ENCODE measurements at regions of chr10 and their contacts with region 1.

Region 1: GRCh38 chr10:61903221-61903927 is 1.9 kb downstream of the ARID5B start:
- DNase-seq: peak; percentile 68
- H3K4me3 Mint-ChIP-seq: peak overlapping the region; percentile 90
- H3K27ac Mint-ChIP-seq: peak overlapping the region; percentile 100
- H3K4me1 Mint-ChIP-seq: peaks cover 16% of the 10 kb centered on the region
- H3K27me3 Mint-ChIP-seq: no peaks in the 10 kb centered on the region
- CTCF ChIP-seq: peak; percentile 22

Region 2: DNA sequence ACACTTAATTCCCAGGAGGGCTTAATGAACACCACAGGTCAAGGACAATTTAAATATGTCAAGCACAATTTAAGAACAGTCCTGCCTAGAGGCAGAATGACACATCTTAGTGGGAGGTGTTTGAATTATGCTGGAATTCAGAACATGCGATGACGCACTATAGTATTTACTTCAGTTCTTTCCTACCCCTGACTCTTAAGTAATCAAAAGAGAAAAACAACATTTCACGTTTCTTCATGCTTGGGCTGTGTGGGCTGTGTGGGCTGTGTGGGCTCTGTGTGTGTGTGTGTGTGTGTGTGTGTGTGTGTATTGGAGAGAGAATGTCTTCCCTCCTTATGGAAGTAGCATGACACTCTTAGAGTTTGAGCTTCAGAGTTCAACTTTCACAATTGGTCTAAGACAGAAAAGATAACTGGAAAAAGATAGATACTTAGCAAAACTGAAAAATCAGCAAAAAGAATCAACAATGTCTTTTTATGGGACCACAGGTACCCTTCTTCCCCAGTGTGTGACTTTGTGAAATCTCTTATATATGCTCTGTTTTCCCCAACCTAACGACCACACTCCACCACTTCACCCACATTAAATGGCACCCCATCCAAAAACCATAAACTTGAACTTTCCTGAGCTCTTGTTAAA is 274.4 kb before region 1 on chr10:
- CTCF ChIA-PET with region 1: interaction called, 3 read pairs
- POLR2A ChIA-PET with region 1: interaction called, 13 read pairs
- intact Hi-C with region 1: loop called (anchors 5 kb)
- DNase-seq: peak; percentile 90
- H3K4me3 Mint-ChIP-seq: peak overlapping the region; percentile 51
- H3K27ac Mint-ChIP-seq: peak overlapping the region; percentile 90
- H3K4me1 Mint-ChIP-seq: peaks cover 37% of the 10 kb centered on the region
- H3K27me3 Mint-ChIP-seq: no peaks in the 10 kb centered on the region
- CTCF ChIP-seq: no peak

Region 3: GRCh38 chr10:61835069-61835945 is 68.1 kb before region 1 on chr10:
- CTCF ChIA-PET with region 1: interaction called, 12 read pairs
- POLR2A ChIA-PET with region 1: interaction called, 118 read pairs
- intact Hi-C with region 1: loop called (anchors 2 kb)
- DNase-seq: peak; percentile 70
- H3K4me3 Mint-ChIP-seq: no peak overlapping the region
- H3K27ac Mint-ChIP-seq: peak overlapping the region; percentile 83
- H3K4me1 Mint-ChIP-seq: peaks cover 31% of the 10 kb centered on the region
- H3K27me3 Mint-ChIP-seq: no peaks in the 10 kb centered on the region
- CTCF ChIP-seq: peak; percentile 50

Region 4: GRCh38 chr10:61974601-61975390 is 71.4 kb after region 1 on chr10:
- CTCF ChIA-PET with region 1: no interaction called
- POLR2A ChIA-PET with region 1: interaction called, 18 read pairs
- intact Hi-C with region 1: no loop called
- DNase-seq: peak; percentile 50
- H3K4me3 Mint-ChIP-seq: no peak overlapping the region
- H3K27ac Mint-ChIP-seq: no peak overlapping the region
- H3K4me1 Mint-ChIP-seq: peaks cover 16% of the 10 kb centered on the region
- H3K27me3 Mint-ChIP-seq: no peaks in the 10 kb centered on the region
- CTCF ChIP-seq: no peak

Region 5: DNA sequence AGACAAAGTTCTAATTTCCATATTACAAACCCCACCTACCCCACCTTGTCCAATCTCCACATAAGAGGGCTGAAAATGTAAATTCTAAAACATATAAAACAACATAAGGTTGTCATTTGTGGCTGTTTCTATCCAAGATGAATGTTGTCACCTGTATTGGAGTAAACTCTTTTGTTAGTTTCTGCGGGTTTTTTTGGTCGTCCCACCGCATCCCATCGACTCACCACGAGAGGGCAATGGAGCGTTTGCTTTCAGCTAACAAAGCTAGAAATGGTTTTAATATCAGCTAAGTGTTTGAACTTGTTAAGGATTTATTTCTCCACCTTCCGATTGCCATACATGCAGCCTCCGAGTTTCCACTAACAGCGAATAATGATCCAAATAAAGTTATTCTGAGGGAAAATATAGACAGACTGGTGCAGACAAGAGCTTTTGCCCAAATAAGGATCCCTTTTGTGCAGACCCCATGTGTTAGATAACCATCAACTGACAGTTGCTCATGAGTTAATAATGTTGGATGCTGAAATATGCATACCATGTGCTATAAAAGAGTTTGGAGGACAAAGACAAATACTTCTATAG is 135.3 kb after region 1 on chr10:
- CTCF ChIA-PET with region 1: interaction called, 46 read pairs
- POLR2A ChIA-PET with region 1: interaction called, 82 read pairs
- intact Hi-C with region 1: loop called (anchors 1 kb)
- DNase-seq: peak; percentile 78
- H3K4me3 Mint-ChIP-seq: peak overlapping the region; percentile 30
- H3K27ac Mint-ChIP-seq: peak overlapping the region; percentile 52
- H3K4me1 Mint-ChIP-seq: peaks cover 41% of the 10 kb centered on the region
- H3K27me3 Mint-ChIP-seq: no peaks in the 10 kb centered on the region
- CTCF ChIP-seq: peak; percentile 76

Region 6: GRCh38 chr10:62244780-62245467 is 341.6 kb after region 1 on chr10:
- CTCF ChIA-PET with region 1: interaction called, 15 read pairs
- POLR2A ChIA-PET with region 1: interaction called, 105 read pairs
- intact Hi-C with region 1: loop called (anchors 1 kb)
- DNase-seq: peak; percentile 83
- H3K4me3 Mint-ChIP-seq: peak overlapping the region; percentile 79
- H3K27ac Mint-ChIP-seq: no peak overlapping the region
- H3K4me1 Mint-ChIP-seq: peaks cover 20% of the 10 kb centered on the region
- H3K27me3 Mint-ChIP-seq: no peaks in the 10 kb centered on the region
- CTCF ChIP-seq: peak; percentile 53

Measured in MCF 10A (cell line).